Pancreas (tissue), 10 donors: ENCODE measurements at regions of chr4 and their contacts with region 1.

Region 1: DNA sequence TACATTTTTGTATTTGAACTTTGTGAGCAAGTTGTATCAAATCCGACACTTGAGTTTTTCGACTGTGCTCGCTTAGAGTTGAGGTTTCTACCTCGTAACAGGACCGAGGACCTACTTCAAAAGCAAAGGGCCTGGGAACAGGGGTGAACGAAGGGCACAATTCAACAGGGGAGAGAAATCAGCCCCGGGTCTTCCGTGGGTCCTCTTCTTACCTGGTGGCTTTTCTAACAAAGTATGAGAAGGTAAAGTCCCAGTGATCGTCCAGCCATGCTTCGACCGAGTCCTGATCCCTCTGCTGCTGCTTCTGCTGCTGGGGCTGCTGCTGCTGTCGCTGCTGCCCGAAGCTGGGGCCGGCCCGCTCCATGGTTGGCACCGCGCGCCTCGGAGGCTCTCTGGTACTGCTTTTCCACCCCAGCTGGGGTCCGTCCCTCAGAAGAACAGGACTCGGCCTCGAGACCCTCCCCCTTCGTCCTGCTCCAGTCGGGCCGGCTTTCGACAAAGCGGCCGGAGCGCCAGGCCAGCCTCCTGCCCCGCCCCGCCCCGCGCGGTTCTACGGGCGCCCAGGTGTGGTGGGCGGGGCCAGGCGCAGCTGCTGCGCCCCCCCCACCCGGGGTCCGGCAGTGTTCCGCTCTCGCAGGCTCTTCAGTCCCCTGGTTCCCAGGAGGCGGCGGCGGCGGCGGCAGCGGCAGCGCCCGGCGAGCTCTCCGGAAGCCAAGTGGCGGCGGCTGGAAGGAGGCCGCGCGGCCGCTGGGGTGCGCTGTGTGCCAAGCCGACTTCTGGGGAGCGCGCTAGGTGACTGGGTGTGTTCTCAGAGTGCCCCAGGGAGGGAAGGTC is at the start of gene PDE5A:
- DNase-seq: peak; percentile 85 to 95 (median 91)
- ATAC-seq: peak; percentile 90 to 93 (median 91)
- H3K4me3 ChIP-seq: peak within 1 kb of the TSS; percentile 47 to 82 (median 54)
- H3K27ac ChIP-seq: peak within 1 kb of the TSS; percentile 73 to 89 (median 82)
- H3K4me1 ChIP-seq: peaks cover 0 to 14% (median 4%) of the 10 kb centered on the region in 3 donors
- H3K27me3 ChIP-seq: no peaks in the 10 kb centered on the region
- CTCF ChIP-seq: peak; percentile 72 to 81 (median 78)
- total RNA-seq, gene PDE5A: 13.1 to 34.4 (median 21.0) TPM

Region 2: DNA sequence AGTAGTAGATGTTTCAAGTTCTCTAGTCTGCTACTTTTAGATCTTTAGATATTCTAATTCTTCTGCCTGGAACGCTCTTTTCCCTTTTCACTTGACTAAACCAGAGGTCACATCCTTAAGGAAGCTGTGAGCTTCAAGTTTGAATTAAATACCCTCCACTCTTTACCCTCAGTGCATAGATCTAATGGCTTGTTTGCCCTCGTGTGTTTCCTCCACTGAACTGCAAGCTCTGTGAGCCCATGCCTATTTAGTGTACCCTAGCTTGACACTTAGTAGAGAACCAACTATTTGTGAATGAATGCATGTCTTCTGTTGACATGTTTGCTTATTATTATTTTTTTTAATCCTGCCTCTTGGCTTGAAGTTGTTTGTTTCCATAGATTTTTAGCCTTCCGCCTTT is 138.2 kb before region 1 on chr4:
- intact Hi-C with region 1: no loop called
- DNase-seq: no peak
- ATAC-seq: peak in 2 of 4 donors; percentile 32 to 62
- H3K4me3 ChIP-seq: no peak overlapping the region
- H3K27ac ChIP-seq: no peak overlapping the region
- H3K4me1 ChIP-seq: no peaks in the 10 kb centered on the region
- H3K27me3 ChIP-seq: no peaks in the 10 kb centered on the region
- CTCF ChIP-seq: no peak

Region 3: GRCh38 chr4:119559044-119559647 is 69.4 kb before region 1 on chr4:
- intact Hi-C with region 1: loop called in 1 of 3 experiments (anchors 10 kb)
- DNase-seq: no peak
- ATAC-seq: peak; percentile 58 to 75 (median 68)
- H3K4me3 ChIP-seq: no peak overlapping the region
- H3K27ac ChIP-seq: no peak overlapping the region
- H3K4me1 ChIP-seq: no peaks in the 10 kb centered on the region
- H3K27me3 ChIP-seq: no peaks in the 10 kb centered on the region
- CTCF ChIP-seq: peak in 3 of 4 donors; percentile 29 to 45 (median 42)

Region 4: DNA sequence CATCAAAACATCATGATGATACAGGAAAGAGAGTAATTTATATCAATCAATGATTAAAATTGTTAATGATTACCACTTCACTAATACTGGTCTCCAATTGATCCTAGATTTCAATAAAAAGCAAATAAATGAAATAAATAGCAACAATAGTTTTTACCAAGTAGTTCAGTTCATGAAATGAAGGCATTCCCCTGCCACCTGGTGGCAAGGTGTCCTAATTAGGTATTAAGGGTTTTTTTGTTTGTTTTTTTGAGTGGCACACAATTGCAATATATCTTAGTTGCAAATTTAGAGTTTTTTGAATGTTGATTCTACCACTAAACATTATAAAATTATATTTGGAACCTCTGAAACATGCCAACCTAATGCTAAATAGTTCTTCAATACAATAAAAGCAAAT is 157.4 kb after region 1 on chr4:
- intact Hi-C with region 1: loop called in 1 of 3 experiments (anchors 5 kb)
- DNase-seq: peak in 1 of 6 donors; percentile 19
- ATAC-seq: peak in 2 of 4 donors; percentile 45 to 51
- H3K4me3 ChIP-seq: no peak overlapping the region
- H3K27ac ChIP-seq: no peak overlapping the region
- H3K4me1 ChIP-seq: no peaks in the 10 kb centered on the region
- H3K27me3 ChIP-seq: no peaks in the 10 kb centered on the region
- CTCF ChIP-seq: peak in 2 of 4 donors; percentile 23 to 28

Region 5: DNA sequence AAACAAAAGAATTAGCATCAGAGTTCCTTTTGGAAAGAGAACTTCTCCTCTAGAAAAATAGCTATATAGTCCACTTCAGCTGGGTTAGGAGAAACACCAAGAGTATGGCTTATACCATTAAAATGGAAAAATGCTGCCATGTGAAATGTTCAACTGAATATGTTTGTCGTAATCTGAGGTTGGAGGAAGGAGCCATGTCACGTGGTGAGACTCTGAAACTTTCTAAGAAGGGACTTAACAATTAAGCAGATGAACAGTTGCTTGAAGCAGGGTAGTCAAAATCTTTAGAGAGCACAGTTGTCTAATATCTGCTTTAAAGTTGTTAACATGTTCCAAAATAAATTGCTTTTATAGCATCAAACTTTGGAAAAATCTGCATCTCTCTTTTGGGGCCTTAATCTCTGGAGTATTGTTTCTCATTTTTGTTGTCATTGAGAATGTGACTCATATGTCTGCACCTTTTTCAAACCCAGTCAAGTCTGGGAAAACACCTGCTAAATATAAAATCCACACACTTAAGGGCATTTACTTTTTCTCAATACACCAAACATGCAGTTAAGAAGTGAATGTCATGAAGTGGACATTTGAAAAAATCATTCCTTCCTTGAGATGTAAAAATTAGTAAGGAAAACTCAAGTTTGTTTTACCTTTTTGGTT is 168.8 kb after region 1 on chr4:
- intact Hi-C with region 1: no loop called
- DNase-seq: no peak
- ATAC-seq: no peak
- H3K4me3 ChIP-seq: no peak overlapping the region
- H3K27ac ChIP-seq: no peak overlapping the region
- H3K4me1 ChIP-seq: no peaks in the 10 kb centered on the region
- H3K27me3 ChIP-seq: no peaks in the 10 kb centered on the region
- CTCF ChIP-seq: no peak

Region 6: GRCh38 chr4:120049732-120050494 is 421.4 kb after region 1 on chr4:
- intact Hi-C with region 1: loop called in 1 of 3 experiments (anchors 5 kb)
- DNase-seq: peak in 5 of 6 donors; percentile 62 to 87 (median 68)
- ATAC-seq: peak; percentile 97 to 100 (median 99)
- H3K4me3 ChIP-seq: no peak overlapping the region
- H3K27ac ChIP-seq: no peak overlapping the region
- H3K4me1 ChIP-seq: no peaks in the 10 kb centered on the region
- H3K27me3 ChIP-seq: no peaks in the 10 kb centered on the region
- CTCF ChIP-seq: peak; percentile 68 to 77 (median 72)